K562 (cell line): ENCODE measurements at regions of chr3 and their contacts with region 1.

Region 1: GRCh38 chr3:141998669-141999290 is 122.3 kb downstream of the ATP1B3 start:
- DNase-seq: no peak
- ATAC-seq: peak; percentile 61
- H3K4me3 ChIP-seq: no peak overlapping the region
- H3K27ac ChIP-seq: no peak overlapping the region
- H3K4me1 ChIP-seq: no peaks in the 10 kb centered on the region; a peak in 1 of 5 replicates
- H3K27me3 ChIP-seq: no peaks in the 10 kb centered on the region
- CTCF ChIP-seq: peak in 1 of 3 experiments; percentile 53; a peak in 2 of 6 replicates
- EP300 ChIP-seq: no peak
- POLR2A ChIP-seq: no peak
- RAD21 ChIP-seq: peak; percentile 55 to 56

Region 2: DNA sequence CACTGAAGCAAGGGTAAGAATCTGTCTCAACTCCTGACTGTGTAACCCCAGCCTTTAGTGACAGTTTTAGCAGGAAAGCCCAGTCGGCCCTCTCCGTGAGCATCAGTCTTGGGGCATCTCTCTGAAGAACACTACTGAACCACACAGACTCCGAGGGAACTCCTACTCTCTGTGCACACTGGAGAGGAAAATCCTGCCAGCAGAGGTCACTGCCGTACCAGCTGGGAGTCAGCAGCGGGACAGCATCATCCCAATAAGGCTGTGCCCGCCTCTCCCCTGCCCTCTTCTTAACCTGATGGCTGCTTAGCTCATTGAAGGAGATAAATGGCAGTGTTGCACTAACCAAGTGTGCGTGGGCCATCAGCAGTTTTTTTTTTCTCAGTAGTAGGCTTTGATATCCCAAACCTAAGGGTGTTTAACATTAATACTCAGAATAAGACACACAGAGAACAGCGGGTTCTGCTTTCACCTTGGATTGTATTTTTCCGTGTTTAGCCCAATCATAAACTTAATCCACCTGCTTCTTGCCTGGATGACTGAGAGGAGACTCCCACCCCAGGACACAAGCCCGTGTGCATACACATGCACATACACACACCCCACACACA is 538.6 kb before region 1 on chr3:
- CTCF ChIA-PET with region 1: no interaction called
- POLR2A ChIA-PET with region 1: no interaction called
- in situ Hi-C with region 1: no loop called
- intact Hi-C with region 1: loop called (anchors 10 kb)
- DNase-seq: peak; percentile 70 to 91 (median 77)
- ATAC-seq: peak; percentile 97
- H3K4me3 ChIP-seq: no peak overlapping the region
- H3K27ac ChIP-seq: no peak overlapping the region
- H3K4me1 ChIP-seq: peaks cover 12 to 30% of the 10 kb centered on the region in 2 experiments; a peak in 4 of 5 replicates
- H3K27me3 ChIP-seq: no peaks in the 10 kb centered on the region
- CTCF ChIP-seq: peak; percentile 91 to 96 (median 93)
- EP300 ChIP-seq: no peak
- POLR2A ChIP-seq: no peak
- RAD21 ChIP-seq: peak; percentile 96 to 97

Region 3: GRCh38 chr3:141960731-141961130 is 38.0 kb before region 1 on chr3:
- CTCF ChIA-PET with region 1: no interaction called
- POLR2A ChIA-PET with region 1: no interaction called
- in situ Hi-C with region 1: no loop called
- intact Hi-C with region 1: no loop called
- DNase-seq: no peak
- ATAC-seq: no peak
- H3K4me3 ChIP-seq: no peak overlapping the region
- H3K27ac ChIP-seq: no peak overlapping the region
- H3K4me1 ChIP-seq: no peaks in the 10 kb centered on the region
- H3K27me3 ChIP-seq: no peaks in the 10 kb centered on the region
- CTCF ChIP-seq: no peak
- EP300 ChIP-seq: no peak
- POLR2A ChIP-seq: no peak
- RAD21 ChIP-seq: no peak

Region 4: DNA sequence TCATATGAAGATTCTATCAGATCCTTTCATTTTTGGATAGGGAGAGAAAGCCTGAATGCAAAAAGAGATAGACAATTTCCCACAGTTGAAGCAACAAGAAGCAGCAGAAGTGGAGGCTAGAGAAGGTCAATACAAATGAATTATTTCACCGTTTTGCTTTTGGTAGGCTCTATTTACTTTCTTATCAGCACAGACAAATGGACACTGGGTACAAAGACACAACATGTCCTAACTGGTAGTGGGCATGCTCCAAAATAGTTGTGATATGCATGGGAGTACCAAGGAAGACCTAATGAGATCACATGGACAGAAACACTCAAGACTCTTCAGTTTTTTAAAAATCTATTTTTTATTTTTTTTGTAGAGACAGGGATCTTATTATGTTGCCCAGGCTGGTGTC is 349.7 kb after region 1 on chr3:
- CTCF ChIA-PET with region 1: no interaction called
- POLR2A ChIA-PET with region 1: no interaction called
- in situ Hi-C with region 1: no loop called
- intact Hi-C with region 1: no loop called
- DNase-seq: no peak
- ATAC-seq: no peak
- H3K4me3 ChIP-seq: no peak overlapping the region
- H3K27ac ChIP-seq: no peak overlapping the region
- H3K4me1 ChIP-seq: no peaks in the 10 kb centered on the region
- H3K27me3 ChIP-seq: no peaks in the 10 kb centered on the region
- CTCF ChIP-seq: no peak
- EP300 ChIP-seq: no peak
- POLR2A ChIP-seq: no peak
- RAD21 ChIP-seq: no peak